ENCODE measurements at regions of chr14 and their contacts with region 1.

Region 1: GRCh38 chr14:103910262-103910935 is 17.9 kb upstream of the TDRD9 start:
- DNase-seq: peak; percentile 80
- H3K4me3 Mint-ChIP-seq: peak overlapping the region; percentile 29
- H3K27ac Mint-ChIP-seq: peak overlapping the region; percentile 77
- H3K4me1 Mint-ChIP-seq: peaks cover 25% of the 10 kb centered on the region
- H3K27me3 Mint-ChIP-seq: no peaks in the 10 kb centered on the region

Region 2: DNA sequence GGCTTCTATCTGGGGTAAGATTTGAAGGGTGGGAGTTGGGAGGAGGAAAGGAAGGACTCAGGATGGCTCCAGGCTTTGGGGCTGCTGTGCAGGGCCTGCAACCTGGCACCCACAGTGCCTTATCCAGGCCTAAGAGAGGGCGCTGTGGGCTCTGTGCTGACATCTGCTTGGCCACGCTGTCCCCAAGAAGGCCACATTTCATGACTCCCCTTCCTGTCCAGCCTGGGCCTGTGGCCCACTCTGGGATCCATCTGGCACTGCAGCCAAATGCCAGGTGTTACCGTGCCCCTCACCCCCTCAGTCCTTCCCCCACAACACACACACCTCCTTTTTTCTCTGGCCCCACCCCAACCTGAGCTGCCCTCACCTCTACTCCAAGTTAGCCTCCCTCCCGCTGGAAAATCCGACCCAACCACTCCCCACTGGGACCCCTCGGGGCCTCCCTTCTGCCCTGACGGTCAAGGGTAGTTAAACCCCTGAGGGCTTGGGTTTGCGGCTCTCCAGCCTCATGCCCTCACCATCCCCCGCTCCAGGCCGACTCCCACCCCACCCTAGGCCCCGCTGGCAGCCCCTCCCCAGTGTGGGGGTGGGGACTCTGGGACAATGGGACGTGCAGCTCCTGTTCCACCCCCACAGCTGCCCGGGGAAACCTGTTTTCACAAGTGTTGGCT is 55.2 kb before region 1 on chr14:
- CTCF ChIA-PET with region 1: no interaction called
- DNase-seq: no peak
- H3K4me3 Mint-ChIP-seq: no peak overlapping the region
- H3K27ac Mint-ChIP-seq: no peak overlapping the region
- H3K4me1 Mint-ChIP-seq: peaks cover 7% of the 10 kb centered on the region
- H3K27me3 Mint-ChIP-seq: peaks cover 9% of the 10 kb centered on the region

Region 3: DNA sequence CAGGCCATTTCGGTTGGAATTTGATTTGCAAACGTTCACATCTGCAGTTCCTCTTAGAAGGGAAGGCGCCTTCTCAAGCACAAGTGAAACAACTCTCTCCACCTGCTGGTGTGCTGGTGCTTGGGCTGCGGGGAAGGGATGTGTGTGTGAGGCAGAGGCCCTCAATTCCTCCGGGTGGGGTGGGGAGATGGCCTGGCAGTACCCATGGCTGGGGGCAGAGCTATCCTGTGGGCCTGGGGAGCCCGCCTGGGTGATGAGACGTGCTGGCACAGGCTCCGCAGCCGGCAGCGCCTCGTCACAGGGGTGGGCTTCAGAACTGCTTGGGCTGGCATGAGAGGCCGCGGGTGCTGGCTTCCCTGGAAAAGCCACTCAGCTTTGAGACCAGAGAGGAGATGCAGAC is 11.1 kb before region 1 on chr14:
- CTCF ChIA-PET with region 1: interaction called, 30 read pairs
- DNase-seq: no peak
- H3K4me3 Mint-ChIP-seq: no peak overlapping the region
- H3K27ac Mint-ChIP-seq: no peak overlapping the region
- H3K4me1 Mint-ChIP-seq: peaks cover 4% of the 10 kb centered on the region
- H3K27me3 Mint-ChIP-seq: peaks cover 5% of the 10 kb centered on the region

Region 4: GRCh38 chr14:103920981-103921854 is 10.8 kb after region 1 on chr14:
- CTCF ChIA-PET with region 1: interaction called, 10 read pairs
- DNase-seq: peak; percentile 95
- H3K4me3 Mint-ChIP-seq: peak overlapping the region; percentile 88
- H3K27ac Mint-ChIP-seq: peak overlapping the region; percentile 73
- H3K4me1 Mint-ChIP-seq: peaks cover 14% of the 10 kb centered on the region
- H3K27me3 Mint-ChIP-seq: peaks cover 27% of the 10 kb centered on the region

Region 5: DNA sequence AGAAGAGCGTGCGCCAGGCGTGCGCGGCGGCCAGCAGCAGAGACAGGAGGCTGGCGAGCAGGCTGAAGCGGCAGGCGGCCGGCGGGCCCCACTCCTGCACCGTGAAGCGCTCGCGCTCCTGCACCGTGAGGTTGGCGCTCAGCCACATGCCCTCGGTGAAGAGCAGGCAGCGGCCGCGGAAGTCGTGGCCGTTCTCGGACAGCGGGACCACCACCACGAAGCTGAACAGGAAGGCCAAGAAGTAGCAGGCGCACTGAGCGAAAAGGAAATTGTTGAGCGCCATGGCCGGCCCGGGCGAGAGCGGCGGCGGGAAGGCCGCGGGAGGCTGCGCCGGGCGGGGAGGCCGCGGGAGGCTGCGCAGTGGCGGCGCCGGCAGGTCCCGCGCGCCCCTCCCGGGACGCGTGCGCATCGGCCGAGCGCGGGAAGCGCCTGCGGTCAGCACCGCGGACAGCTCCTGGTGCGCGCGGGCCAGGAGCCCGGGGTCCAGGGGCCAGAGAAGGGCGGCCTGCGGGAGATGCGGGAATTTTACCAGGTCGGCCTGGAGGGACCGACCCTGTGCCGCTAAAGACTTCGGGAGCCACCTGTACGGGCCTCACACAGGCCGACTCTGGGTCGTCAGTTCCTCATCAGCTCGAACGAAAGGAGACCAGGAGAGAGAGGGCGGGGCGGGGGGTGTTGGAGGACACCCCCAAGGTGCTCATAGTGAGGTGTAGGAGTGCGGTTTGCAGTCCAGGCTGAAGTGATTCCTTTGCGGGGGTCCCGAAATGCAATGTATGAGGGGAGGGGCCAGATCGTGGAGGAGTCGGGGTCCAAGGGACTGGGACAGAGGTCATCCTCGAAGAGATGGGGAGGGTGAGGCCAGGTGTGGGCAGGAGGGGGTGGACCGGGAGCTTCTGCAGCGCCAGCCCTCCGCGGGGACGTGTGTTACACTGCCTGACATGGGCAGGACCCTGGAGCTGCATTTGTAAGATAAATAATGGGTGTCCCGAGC is 694.4 kb after region 1 on chr14 and contains the start of gene TMEM179:
- CTCF ChIA-PET with region 1: no interaction called
- DNase-seq: no peak
- H3K4me3 Mint-ChIP-seq: no peak within 1 kb of the TSS
- H3K27ac Mint-ChIP-seq: no peak within 1 kb of the TSS
- H3K4me1 Mint-ChIP-seq: peaks cover 3% of the 10 kb centered on the region
- H3K27me3 Mint-ChIP-seq: peaks cover 72% of the 10 kb centered on the region